GM12878 (cell line): ENCODE measurements at regions of chr11 and their contacts with region 1.

Region 1: GRCh38 chr11:36041988-36042611 is 98.2 kb downstream of the LDLRAD3 start:
- DNase-seq: no peak
- ATAC-seq: peak; percentile 86
- H3K4me3 ChIP-seq: no peak overlapping the region
- H3K27ac ChIP-seq: no peak overlapping the region
- H3K4me1 ChIP-seq: no peaks in the 10 kb centered on the region
- H3K27me3 ChIP-seq: no peaks in the 10 kb centered on the region; a peak in 1 of 4 replicates
- CTCF ChIP-seq: peak; percentile 48 to 58 (median 51); a peak in 5 of 6 replicates
- EP300 ChIP-seq: no peak
- POLR2A ChIP-seq: no peak
- RAD21 ChIP-seq: peak; percentile 63

Region 2: GRCh38 chr11:36030731-36031281 is 11.3 kb before region 1 on chr11:
- CTCF ChIA-PET with region 1: interaction called, 14 read pairs
- POLR2A ChIA-PET with region 1: no interaction called
- RAD21 ChIA-PET with region 1: no interaction called
- SMC1A ChIA-PET with region 1: interaction called, 4 read pairs
- in situ Hi-C with region 1: no loop called
- intact Hi-C with region 1: no loop called
- DNase-seq: no peak
- ATAC-seq: no peak
- H3K4me3 ChIP-seq: no peak overlapping the region
- H3K27ac ChIP-seq: no peak overlapping the region
- H3K4me1 ChIP-seq: no peaks in the 10 kb centered on the region
- H3K27me3 ChIP-seq: no peaks in the 10 kb centered on the region
- CTCF ChIP-seq: no peak
- EP300 ChIP-seq: no peak
- POLR2A ChIP-seq: no peak
- RAD21 ChIP-seq: no peak

Region 3: DNA sequence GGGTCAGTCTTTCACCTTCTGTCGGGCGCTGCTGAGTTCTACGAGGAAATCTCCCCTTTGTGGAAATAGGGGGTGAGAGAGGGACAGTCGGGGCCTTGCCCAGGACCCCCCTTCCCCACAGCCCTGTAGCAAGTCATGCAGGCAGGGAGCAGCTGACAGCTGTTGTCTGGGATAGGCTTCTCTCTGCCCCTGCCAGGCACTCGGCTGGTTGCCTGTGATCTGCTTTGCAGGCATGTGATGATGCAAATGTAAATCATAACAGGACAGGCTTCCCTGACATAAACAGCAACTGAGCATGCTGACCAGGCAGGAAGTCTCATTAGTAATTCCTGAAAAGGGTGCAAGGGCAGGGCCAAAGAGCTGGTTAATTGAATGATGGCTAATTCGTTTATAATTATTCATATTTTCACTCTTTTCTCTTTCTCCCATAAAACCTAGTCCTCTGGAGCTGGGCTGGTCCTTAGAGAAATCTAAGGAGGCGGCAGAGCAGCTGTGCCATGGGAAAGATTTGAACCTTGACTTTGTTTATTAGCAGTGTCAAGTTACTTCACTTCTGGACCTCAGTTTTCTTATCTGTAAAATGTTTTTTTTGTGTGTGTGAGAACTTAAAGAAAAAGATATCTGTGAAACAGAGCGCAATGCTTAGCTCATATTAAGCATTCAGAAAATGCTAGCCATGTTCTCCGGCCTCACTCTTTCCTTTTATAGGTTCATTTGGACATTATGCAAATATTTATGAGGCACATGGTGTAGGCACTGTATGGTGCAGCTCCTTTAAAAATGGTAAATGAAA is 31.5 kb after region 1 on chr11:
- CTCF ChIA-PET with region 1: interaction called, 21 read pairs
- POLR2A ChIA-PET with region 1: no interaction called
- RAD21 ChIA-PET with region 1: interaction called, 9 read pairs
- SMC1A ChIA-PET with region 1: interaction called, 10 read pairs
- in situ Hi-C with region 1: no loop called
- intact Hi-C with region 1: no loop called
- DNase-seq: no peak
- ATAC-seq: peak; percentile 41
- H3K4me3 ChIP-seq: no peak overlapping the region
- H3K27ac ChIP-seq: no peak overlapping the region
- H3K4me1 ChIP-seq: no peaks in the 10 kb centered on the region; the same call in 1 of the 2 replicates
- H3K27me3 ChIP-seq: no peaks in the 10 kb centered on the region
- CTCF ChIP-seq: no peak
- EP300 ChIP-seq: no peak
- POLR2A ChIP-seq: no peak
- RAD21 ChIP-seq: no peak

Region 4: GRCh38 chr11:36149538-36150242 is 107.6 kb after region 1 on chr11:
- CTCF ChIA-PET with region 1: interaction called, 4 read pairs
- POLR2A ChIA-PET with region 1: no interaction called
- RAD21 ChIA-PET with region 1: interaction called, 4 read pairs
- SMC1A ChIA-PET with region 1: no interaction called
- in situ Hi-C with region 1: no loop called
- intact Hi-C with region 1: loop called (anchors 1 kb)
- DNase-seq: peak; percentile 31
- ATAC-seq: peak; percentile 90
- H3K4me3 ChIP-seq: no peak overlapping the region
- H3K27ac ChIP-seq: no peak overlapping the region
- H3K4me1 ChIP-seq: no peaks in the 10 kb centered on the region
- H3K27me3 ChIP-seq: no peaks in the 10 kb centered on the region
- CTCF ChIP-seq: peak; percentile 48 to 62 (median 61); a peak in 5 of 6 replicates
- EP300 ChIP-seq: peak; percentile 36 to 43; a peak in 1 of 4 replicates
- POLR2A ChIP-seq: no peak
- RAD21 ChIP-seq: peak; percentile 72

Region 5: DNA sequence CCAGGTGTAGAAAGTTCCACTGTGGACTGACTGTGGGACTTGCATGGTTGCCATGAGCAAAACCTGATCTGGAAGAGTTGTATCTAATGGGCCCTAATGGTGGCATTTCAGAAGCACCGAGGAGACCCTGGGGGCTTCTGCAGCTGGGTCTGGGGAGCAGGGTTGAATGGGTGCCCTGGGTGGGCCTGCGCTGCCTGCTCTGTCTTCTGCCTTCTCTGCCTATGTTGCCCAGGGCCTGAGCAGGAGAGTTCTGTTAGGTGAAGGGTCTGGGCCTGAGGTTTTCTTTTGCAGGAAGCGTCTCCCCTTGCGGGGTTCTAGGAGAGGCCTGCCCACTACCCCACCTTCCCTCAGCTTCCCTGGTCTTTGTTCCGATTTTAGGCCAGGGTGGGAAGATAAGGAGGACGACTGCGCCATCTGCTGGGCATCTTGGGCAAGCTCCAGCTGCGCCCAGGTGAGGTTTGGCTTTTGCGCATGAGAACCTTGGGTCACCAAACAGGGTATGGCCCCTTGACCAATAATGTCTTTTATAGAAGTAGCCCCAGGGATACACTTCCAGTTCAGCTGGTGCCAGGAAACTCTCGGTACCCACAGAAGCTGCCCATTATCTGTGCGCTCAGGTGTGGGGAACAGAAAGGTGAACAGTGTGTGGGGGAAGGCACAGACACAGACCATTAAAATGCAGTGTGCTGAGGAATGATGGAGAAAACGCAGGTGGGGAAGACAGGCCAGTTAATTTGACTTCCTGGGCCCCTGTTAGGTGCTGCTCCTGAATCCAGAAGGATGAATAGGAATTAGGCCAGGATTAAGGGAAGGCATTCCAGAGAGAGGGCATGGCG is 223.9 kb after region 1 on chr11:
- CTCF ChIA-PET with region 1: interaction called, 32 read pairs
- POLR2A ChIA-PET with region 1: no interaction called
- RAD21 ChIA-PET with region 1: interaction called, 14 read pairs
- SMC1A ChIA-PET with region 1: interaction called, 9 read pairs
- in situ Hi-C with region 1: no loop called
- intact Hi-C with region 1: loop called (anchors 5 kb)
- DNase-seq: no peak
- ATAC-seq: peak; percentile 95
- H3K4me3 ChIP-seq: no peak overlapping the region
- H3K27ac ChIP-seq: no peak overlapping the region
- H3K4me1 ChIP-seq: no peaks in the 10 kb centered on the region
- H3K27me3 ChIP-seq: no peaks in the 10 kb centered on the region
- CTCF ChIP-seq: peak; percentile 89 to 93 (median 92)
- EP300 ChIP-seq: no peak
- POLR2A ChIP-seq: no peak
- RAD21 ChIP-seq: peak; percentile 91